ENCODE measurements at regions of chr7 and their contacts with region 1.

Region 1: DNA sequence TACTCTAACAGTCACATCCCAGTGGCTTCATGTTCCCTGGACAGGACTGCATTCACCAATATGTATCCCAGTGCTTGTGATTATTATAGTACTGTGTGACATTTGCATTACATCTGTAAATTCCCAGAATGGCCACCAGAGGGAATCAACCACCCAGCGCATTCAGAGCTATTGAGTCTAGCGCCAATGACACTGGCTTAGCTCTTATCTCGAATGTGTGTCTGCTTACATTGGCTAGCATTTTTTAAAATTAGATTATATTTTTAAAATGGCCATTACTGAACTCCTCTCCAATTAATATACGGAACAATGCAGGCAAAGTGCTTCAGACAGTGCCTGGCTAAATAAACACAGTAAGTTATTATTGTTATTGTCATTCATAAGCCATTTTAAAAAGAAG is 36.3 kb downstream of the TRIL start:
- DNase-seq: peak; percentile 55
- H3K4me3 ChIP-seq: no peak overlapping the region
- CTCF ChIP-seq: peak; percentile 91

Region 2: DNA sequence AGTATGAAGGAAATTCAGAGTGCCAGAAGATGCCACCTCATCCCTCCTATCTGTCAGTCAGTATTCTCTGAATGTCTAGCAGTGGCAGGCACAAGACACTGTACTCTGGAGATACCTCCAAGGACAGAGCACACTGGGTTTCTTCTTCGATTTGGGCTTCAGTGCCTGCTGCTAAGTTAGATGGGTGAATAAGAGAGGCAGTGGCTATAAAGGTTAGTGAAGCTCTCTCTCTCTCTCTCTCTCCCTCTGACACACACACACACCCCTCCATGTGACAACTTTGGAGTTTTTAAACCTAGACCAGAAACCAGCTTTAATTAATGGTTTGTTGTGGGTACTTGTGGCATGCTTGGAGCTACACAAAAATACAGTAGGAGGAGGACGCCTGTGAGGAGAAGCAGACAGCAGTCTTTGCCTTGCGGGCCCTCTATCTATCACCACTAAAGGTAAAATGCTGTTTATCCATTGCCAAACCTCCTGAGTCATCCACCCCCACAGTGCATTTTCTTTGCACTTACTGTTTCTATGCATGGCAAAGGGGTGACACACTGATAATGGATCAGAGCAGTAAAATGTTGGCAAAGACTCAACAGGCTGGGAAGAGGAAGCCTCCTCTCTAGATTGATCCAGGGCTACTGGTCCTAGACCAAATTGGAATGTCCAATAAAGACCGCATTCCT is 66.1 kb before region 1 on chr7:
- in situ Hi-C with region 1: no loop called
- DNase-seq: peak; percentile 86
- H3K4me3 ChIP-seq: no peak overlapping the region
- CTCF ChIP-seq: no peak

Region 3: GRCh38 chr7:29386196-29386765 is 464.5 kb after region 1 on chr7:
- in situ Hi-C with region 1: no loop called
- DNase-seq: no peak
- H3K4me3 ChIP-seq: no peak overlapping the region
- CTCF ChIP-seq: no peak

Region 4: GRCh38 chr7:29413626-29414136 is 491.9 kb after region 1 on chr7:
- in situ Hi-C with region 1: loop called (anchors 5 kb)
- DNase-seq: no peak
- H3K4me3 ChIP-seq: no peak overlapping the region
- CTCF ChIP-seq: no peak

Measured in astrocyte of the cerebellum (primary cell).